Common myeloid progenitor, CD34-positive (primary cell): ENCODE measurements at regions of chr21 and their contacts with region 1.

Region 1: DNA sequence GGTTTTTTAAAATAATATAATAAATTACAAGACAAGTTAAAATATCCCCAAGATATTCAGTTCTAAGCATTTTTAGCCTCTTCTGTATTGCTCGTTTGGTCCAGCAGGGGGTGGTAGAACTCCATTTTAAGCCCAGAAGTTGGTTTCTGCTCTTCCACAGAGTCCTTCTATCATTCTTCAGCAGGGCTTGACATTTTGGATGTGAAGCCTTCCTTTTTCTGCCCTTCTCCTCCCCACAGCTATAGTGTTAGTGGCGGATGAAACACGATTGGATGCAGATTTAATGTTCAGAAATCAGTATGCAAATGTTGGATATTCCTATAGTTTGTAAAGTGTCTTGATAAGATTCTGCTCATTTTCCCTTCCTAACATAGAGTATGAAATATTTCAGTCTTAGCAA is 1.4 kb downstream of the NCAM2 start:
- DNase-seq: peak; percentile 53 to 81 (median 66)
- H3K4me3 ChIP-seq: no peak overlapping the region
- H3K27ac ChIP-seq: no peak overlapping the region
- H3K4me1 ChIP-seq: peaks cover 4 to 20% (median 17%) of the 10 kb centered on the region in 4 experiments
- H3K27me3 ChIP-seq: peaks cover 0 to 30% (median 13%) of the 10 kb centered on the region in 5 experiments

Region 2: DNA sequence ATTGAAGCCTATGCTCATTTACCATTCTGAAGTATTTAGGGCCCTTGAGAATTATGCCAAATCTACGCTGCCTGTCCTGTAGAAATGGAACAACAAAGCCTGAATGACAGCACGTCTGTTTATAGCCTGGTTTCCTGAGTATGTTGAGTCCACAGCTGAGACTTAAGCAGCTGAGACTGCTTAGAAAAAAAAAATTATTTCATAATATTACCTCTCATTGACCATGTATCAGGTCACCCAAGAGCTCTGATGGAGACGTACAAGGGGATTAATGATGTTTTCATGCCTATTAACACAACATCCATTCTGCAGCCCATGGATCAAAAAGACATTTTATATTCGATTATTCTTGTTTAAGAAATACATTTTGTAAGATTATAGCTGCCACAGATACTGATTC is 388.7 kb before region 1 on chr21:
- CTCF ChIA-PET with region 1: no interaction called
- POLR2A ChIA-PET with region 1: no interaction called
- DNase-seq: no peak
- H3K4me3 ChIP-seq: no peak overlapping the region
- H3K27ac ChIP-seq: no peak overlapping the region
- H3K4me1 ChIP-seq: no peaks in the 10 kb centered on the region
- H3K27me3 ChIP-seq: no peaks in the 10 kb centered on the region

Region 3: GRCh38 chr21:21018821-21019220 is 19.2 kb after region 1 on chr21:
- CTCF ChIA-PET with region 1: interaction called, 10 read pairs
- POLR2A ChIA-PET with region 1: no interaction called
- DNase-seq: no peak
- H3K4me3 ChIP-seq: no peak overlapping the region
- H3K27ac ChIP-seq: no peak overlapping the region
- H3K4me1 ChIP-seq: no peaks in the 10 kb centered on the region
- H3K27me3 ChIP-seq: no peaks in the 10 kb centered on the region

Region 4: GRCh38 chr21:21101911-21102310 is 102.3 kb after region 1 on chr21:
- CTCF ChIA-PET with region 1: interaction called, 20 read pairs
- POLR2A ChIA-PET with region 1: no interaction called
- DNase-seq: peak; percentile 43 to 70 (median 64)
- H3K4me3 ChIP-seq: no peak overlapping the region
- H3K27ac ChIP-seq: no peak overlapping the region
- H3K4me1 ChIP-seq: no peaks in the 10 kb centered on the region
- H3K27me3 ChIP-seq: peaks cover 0 to 2% (median 0%) of the 10 kb centered on the region in 5 experiments

Region 5: GRCh38 chr21:21286170-21286798 is 286.6 kb after region 1 on chr21:
- CTCF ChIA-PET with region 1: no interaction called
- POLR2A ChIA-PET with region 1: no interaction called
- DNase-seq: peak in 2 of 3 donors; percentile 36 to 41
- H3K4me3 ChIP-seq: no peak overlapping the region
- H3K27ac ChIP-seq: no peak overlapping the region
- H3K4me1 ChIP-seq: no peaks in the 10 kb centered on the region
- H3K27me3 ChIP-seq: no peaks in the 10 kb centered on the region

Region 6: DNA sequence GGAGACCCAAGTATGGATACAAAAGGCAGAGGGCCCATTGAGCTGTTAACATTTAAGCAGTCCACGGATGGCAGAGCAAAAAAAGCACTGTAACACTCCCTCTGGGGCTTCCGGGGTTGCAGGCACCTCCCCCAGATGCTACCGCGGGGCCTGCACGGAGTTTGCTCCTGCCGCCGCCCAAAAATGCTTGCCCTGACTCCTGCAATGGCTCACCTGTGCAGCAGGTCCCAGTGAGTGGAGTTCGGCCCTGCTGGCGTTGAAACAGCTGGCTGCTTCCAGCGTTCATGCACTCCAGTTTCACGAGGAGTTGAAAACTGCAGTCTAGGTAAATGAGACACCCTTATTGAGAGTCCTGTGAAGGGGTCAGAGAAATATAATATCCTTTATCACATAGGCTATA is 831.4 kb after region 1 on chr21:
- CTCF ChIA-PET with region 1: no interaction called
- POLR2A ChIA-PET with region 1: no interaction called
- DNase-seq: no peak
- H3K4me3 ChIP-seq: no peak overlapping the region
- H3K27ac ChIP-seq: no peak overlapping the region
- H3K4me1 ChIP-seq: no peaks in the 10 kb centered on the region
- H3K27me3 ChIP-seq: no peaks in the 10 kb centered on the region